GM10248 (cell line): ENCODE measurements at regions of chr19 and their contacts with region 1.

Region 1: DNA sequence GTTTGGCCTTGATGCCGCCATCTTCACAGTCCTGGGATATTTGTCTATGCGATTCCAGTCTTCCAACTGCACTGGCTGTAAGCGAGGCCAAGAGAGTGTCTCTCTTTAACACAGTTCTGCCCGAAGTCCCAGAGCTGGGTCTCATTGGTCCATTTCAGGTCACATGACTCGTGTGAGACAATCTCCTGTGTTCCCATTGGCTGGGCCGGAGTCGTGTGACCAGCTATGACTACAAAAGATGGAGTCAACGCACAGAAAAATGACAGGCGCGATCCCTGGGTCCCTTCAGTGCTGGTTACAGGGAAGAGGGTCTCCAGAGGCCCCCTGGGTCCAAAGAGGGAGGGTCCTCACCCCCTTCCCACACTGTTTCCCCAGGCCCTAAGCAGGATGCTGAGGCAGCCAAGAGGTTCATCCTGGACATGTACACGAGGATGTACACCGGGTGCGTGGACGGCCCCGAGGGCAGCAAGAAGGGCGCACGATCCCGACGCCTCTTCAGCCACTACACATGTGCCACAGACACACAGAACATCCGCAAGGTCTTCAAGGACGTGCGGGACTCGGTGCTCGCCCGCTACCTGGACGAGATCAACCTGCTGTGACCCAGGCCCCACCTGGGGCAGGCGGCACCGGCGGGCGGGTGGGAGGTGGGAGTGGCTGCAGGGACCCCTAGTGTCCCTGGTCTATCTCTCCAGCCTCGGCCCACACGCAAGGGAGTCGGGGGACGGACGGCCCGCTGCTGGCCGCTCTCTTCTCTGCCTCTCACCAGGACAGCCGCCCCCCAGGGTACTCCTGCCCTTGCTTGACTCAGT is 15.9 kb upstream of the S1PR4 start:
- DNase-seq: no peak
- CTCF ChIP-seq: no peak

Region 2: GRCh38 chr19:3132971-3133792 is 29.4 kb before region 1 on chr19:
- CTCF ChIA-PET with region 1: interaction called, 11 read pairs
- POLR2A ChIA-PET with region 1: no interaction called
- DNase-seq: peak; percentile 81
- CTCF ChIP-seq: no peak

Region 3: GRCh38 chr19:3146677-3147100 is 15.9 kb before region 1 on chr19:
- CTCF ChIA-PET with region 1: interaction called, 12 read pairs
- POLR2A ChIA-PET with region 1: no interaction called
- DNase-seq: no peak
- CTCF ChIP-seq: peak; percentile 83